Left lung (tissue), 14 donors: ENCODE measurements at regions of chr14 and their contacts with region 1.

Region 1: DNA sequence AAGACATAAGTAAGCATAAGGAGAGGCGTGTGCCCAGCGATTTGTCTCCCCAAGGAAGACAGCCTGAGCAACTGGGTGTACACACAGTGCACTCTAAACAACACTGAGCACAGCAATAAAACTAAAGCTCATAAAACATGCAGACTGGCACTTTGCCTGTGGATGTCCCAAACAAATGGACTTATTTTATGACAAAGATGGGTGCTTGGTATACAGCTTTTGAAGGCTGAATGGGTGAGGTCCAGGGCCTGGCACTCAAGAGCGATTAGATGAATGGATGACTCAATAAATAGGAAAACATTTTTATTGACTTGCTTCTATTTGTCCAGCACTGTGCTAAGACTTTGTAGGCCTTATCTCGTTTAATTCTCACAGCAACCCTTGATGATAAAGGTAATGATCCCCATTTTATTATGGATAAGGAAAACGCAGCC is 28.5 kb downstream of the LGMN start:
- DNase-seq: no peak
- ATAC-seq: peak; percentile 16
- H3K4me3 ChIP-seq: no peak overlapping the region
- H3K27ac ChIP-seq: peak overlapping the region; percentile 0 to 27
- H3K4me1 ChIP-seq: peaks cover 9 to 24% of the 10 kb centered on the region in 2 donors
- H3K27me3 ChIP-seq: no peaks in the 10 kb centered on the region
- CTCF ChIP-seq: no peak

Region 2: GRCh38 chr14:92783816-92784431 is 64.0 kb after region 1 on chr14:
- intact Hi-C with region 1: loop called (anchors 2 to 10 kb)
- DNase-seq: peak in 2 of 4 donors; percentile 54 to 62
- ATAC-seq: peak; percentile 83
- H3K4me3 ChIP-seq: no peak overlapping the region
- H3K27ac ChIP-seq: no peak overlapping the region
- H3K4me1 ChIP-seq: peaks cover 0 to 5% of the 10 kb centered on the region in 2 donors
- H3K27me3 ChIP-seq: no peaks in the 10 kb centered on the region
- CTCF ChIP-seq: peak; percentile 46 to 58